PC-3 (cell line): ENCODE measurements at regions of chr6 and their contacts with region 1.

Region 1: GRCh38 chr6:42217519-42218367 is at the start of gene MRPS10:
- DNase-seq: peak; percentile 95
- ATAC-seq: peak; percentile 69
- H3K4me3 ChIP-seq: peak within 1 kb of the TSS; percentile 85
- H3K27ac ChIP-seq: peak within 1 kb of the TSS; percentile 77
- H3K4me1 ChIP-seq: peaks cover 74% of the 10 kb centered on the region
- H3K27me3 ChIP-seq: no peaks in the 10 kb centered on the region
- CTCF ChIP-seq: no peak
- total RNA-seq, gene MRPS10: 72.2 and 82.1 TPM in 2 replicates

Region 2: GRCh38 chr6:42075159-42075838 is 142.4 kb before region 1 on chr6:
- CTCF ChIA-PET with region 1: no interaction called
- POLR2A ChIA-PET with region 1: no interaction called
- intact Hi-C with region 1: loop called (anchors 1 kb)
- DNase-seq: peak; percentile 93
- ATAC-seq: peak; percentile 88
- H3K4me3 ChIP-seq: no peak overlapping the region
- H3K27ac ChIP-seq: no peak overlapping the region
- H3K4me1 ChIP-seq: peaks cover 4% of the 10 kb centered on the region; the same call in 1 of the 2 replicates
- H3K27me3 ChIP-seq: no peaks in the 10 kb centered on the region
- CTCF ChIP-seq: peak; percentile 95

Region 3: DNA sequence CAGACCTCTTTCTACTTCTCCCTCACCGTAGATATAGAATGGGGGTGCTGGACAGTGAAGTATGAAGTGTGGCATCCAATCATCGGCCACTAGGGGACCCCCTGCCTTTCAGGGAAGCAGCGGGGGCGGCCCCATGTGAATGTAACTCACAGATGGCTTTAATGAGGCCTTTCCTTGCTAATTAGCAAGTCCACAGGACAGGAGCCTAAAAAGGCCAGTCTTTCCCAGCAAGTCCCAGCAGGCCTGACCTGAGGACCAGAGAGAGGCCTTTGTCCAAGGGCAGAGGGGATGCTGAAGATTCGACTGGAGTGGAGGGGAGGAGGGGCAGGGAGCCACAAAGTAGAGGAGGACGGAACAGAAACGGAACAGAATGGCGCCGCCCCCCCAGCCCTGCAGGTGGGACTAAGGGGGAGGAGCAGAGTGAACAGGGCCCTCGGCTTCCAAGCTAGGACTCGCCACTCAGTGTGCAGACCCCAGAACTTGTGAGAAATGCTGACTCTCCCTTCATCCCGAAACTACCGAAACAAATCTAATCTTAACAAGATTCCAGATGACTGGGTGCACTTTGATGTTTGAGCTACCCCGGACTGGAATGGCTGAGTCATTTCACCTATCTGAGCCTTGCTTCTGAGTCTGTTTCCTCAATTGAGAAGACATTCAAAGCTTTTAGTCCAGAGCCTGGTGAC is 81.1 kb before region 1 on chr6:
- CTCF ChIA-PET with region 1: no interaction called
- POLR2A ChIA-PET with region 1: no interaction called
- intact Hi-C with region 1: loop called (anchors 2 kb)
- DNase-seq: peak; percentile 85
- ATAC-seq: peak; percentile 36
- H3K4me3 ChIP-seq: peak overlapping the region; percentile 51
- H3K27ac ChIP-seq: peak overlapping the region; percentile 91
- H3K4me1 ChIP-seq: peaks cover 59% of the 10 kb centered on the region
- H3K27me3 ChIP-seq: no peaks in the 10 kb centered on the region
- CTCF ChIP-seq: no peak; the same call in 1 of the 2 replicates

Region 4: DNA sequence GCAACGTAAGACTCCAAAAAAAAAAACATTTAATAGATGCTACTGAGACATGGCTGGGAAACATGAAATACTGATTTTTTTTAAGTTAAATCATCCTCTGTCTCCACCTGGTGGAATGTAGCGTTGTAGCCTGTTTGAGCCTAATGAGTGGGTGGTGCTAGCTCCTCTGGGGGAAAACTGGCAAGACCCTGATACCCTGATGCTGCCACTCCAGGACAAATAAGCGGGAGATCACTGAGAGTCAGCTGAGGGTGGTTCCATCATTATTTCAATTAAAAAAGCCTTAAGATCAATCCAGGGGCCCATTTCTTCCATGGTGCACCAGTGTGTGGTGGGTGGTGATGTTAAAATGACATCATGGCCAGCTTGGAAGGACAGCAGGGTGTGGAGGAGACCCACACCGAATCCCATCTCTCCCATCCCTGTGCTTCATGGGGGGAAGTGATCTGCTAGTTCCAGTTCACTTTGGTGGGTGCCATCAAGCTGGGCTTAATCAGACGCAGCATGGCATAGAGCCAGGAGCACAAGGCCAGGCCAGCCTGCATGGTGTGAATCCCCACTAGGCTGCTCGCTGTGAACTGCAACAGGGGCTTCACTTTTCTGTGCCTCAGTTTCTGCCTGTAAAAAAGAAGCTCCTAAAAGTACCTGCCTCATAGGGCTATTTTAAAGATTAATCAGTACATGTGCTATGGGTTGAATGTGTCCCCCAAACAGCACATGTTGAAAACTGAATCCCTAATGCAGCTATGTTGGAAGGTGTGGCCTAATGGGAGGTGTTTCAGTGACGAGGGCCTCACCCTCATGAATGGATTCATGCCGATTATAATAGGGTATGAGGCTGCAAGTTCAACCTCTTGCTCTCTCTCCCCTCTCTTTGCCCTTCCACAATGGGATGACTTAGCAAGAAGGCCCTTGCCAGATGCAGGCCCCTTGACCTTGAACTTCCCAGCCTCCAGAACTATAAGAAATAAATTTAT is 12.9 kb after region 1 on chr6:
- CTCF ChIA-PET with region 1: interaction called, 6 read pairs
- POLR2A ChIA-PET with region 1: interaction called, 7 read pairs
- intact Hi-C with region 1: loop called (anchors 1 kb)
- DNase-seq: peak; percentile 66
- ATAC-seq: no peak
- H3K4me3 ChIP-seq: no peak overlapping the region
- H3K27ac ChIP-seq: peak overlapping the region; percentile 98
- H3K4me1 ChIP-seq: peaks cover 47% of the 10 kb centered on the region
- H3K27me3 ChIP-seq: no peaks in the 10 kb centered on the region
- CTCF ChIP-seq: peak; percentile 88

Region 5: GRCh38 chr6:42402184-42402583 is 184.4 kb after region 1 on chr6:
- CTCF ChIA-PET with region 1: no interaction called
- POLR2A ChIA-PET with region 1: no interaction called
- intact Hi-C with region 1: no loop called
- DNase-seq: peak; percentile 46
- ATAC-seq: no peak; the same call in 1 of the 2 replicates
- H3K4me3 ChIP-seq: no peak overlapping the region
- H3K27ac ChIP-seq: no peak overlapping the region
- H3K4me1 ChIP-seq: peaks cover 47% of the 10 kb centered on the region
- H3K27me3 ChIP-seq: no peaks in the 10 kb centered on the region
- CTCF ChIP-seq: no peak